Uterus (tissue), 4 donors: ENCODE measurements at regions of chr6 and their contacts with region 1.

Region 1: DNA sequence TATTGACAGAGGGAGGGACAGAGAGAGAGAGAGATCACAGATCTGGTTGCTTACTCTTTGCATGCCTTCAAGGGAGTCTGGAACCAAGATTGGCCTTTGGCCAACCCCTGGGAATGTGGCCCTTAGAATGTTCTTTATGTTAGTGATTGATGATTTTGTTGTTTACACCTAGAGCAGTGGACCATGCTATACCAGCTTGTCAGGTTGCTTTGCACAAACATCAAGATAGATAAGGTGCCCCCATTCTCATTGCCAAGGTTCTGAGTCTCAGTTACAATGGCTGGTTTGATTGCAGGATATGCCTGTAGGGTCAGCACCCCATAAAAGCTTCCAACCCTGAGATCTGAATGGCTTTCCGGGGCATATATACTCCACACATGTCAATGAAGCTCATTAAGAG is 53.5 kb upstream of the SLC2A12 start:
- DNase-seq: no peak
- H3K4me3 ChIP-seq: no peak overlapping the region
- H3K27ac ChIP-seq: no peak overlapping the region
- H3K4me1 ChIP-seq: no peaks in the 10 kb centered on the region
- H3K27me3 ChIP-seq: no peaks in the 10 kb centered on the region
- CTCF ChIP-seq: no peak
- POLR2A ChIP-seq: no peak

Region 2: GRCh38 chr6:133577851-133578250 is 528.1 kb before region 1 on chr6:
- intact Hi-C with region 1: loop called (anchors 10 kb)
- DNase-seq: no peak
- H3K4me3 ChIP-seq: no peak overlapping the region
- H3K27ac ChIP-seq: no peak overlapping the region
- H3K4me1 ChIP-seq: no peaks in the 10 kb centered on the region
- H3K27me3 ChIP-seq: no peaks in the 10 kb centered on the region
- CTCF ChIP-seq: no peak
- POLR2A ChIP-seq: no peak